B cell (primary cell): ENCODE measurements at regions of chr11 and their contacts with region 1.

Region 1: GRCh38 chr11:95705485-95706124 is 84.0 kb downstream of the FAM76B start:
- DNase-seq: peak; percentile 91
- ATAC-seq: peak; percentile 90
- H3K4me3 ChIP-seq: no peak overlapping the region
- H3K4me3 Mint-ChIP-seq: no peak overlapping the region
- H3K27ac ChIP-seq: peak overlapping the region; percentile 14 to 68
- H3K27ac Mint-ChIP-seq: no peak overlapping the region
- H3K4me1 ChIP-seq: peaks cover 28 to 30% of the 10 kb centered on the region in 2 donors
- H3K4me1 Mint-ChIP-seq: peaks cover 27% of the 10 kb centered on the region
- H3K27me3 ChIP-seq: no peaks in the 10 kb centered on the region
- H3K27me3 Mint-ChIP-seq: no peaks in the 10 kb centered on the region
- CTCF ChIP-seq: peak; percentile 91

Region 2: GRCh38 chr11:95175818-95176368 is 529.7 kb before region 1 on chr11:
- CTCF ChIA-PET with region 1: interaction called, 19 read pairs
- POLR2A ChIA-PET with region 1: no interaction called
- intact Hi-C with region 1: no loop called
- DNase-seq: no peak
- ATAC-seq: no peak
- H3K4me3 ChIP-seq: no peak overlapping the region
- H3K4me3 Mint-ChIP-seq: no peak overlapping the region
- H3K27ac ChIP-seq: no peak overlapping the region
- H3K27ac Mint-ChIP-seq: no peak overlapping the region
- H3K4me1 ChIP-seq: no peaks in the 10 kb centered on the region
- H3K4me1 Mint-ChIP-seq: no peaks in the 10 kb centered on the region
- H3K27me3 ChIP-seq: no peaks in the 10 kb centered on the region
- H3K27me3 Mint-ChIP-seq: no peaks in the 10 kb centered on the region
- CTCF ChIP-seq: no peak

Region 3: DNA sequence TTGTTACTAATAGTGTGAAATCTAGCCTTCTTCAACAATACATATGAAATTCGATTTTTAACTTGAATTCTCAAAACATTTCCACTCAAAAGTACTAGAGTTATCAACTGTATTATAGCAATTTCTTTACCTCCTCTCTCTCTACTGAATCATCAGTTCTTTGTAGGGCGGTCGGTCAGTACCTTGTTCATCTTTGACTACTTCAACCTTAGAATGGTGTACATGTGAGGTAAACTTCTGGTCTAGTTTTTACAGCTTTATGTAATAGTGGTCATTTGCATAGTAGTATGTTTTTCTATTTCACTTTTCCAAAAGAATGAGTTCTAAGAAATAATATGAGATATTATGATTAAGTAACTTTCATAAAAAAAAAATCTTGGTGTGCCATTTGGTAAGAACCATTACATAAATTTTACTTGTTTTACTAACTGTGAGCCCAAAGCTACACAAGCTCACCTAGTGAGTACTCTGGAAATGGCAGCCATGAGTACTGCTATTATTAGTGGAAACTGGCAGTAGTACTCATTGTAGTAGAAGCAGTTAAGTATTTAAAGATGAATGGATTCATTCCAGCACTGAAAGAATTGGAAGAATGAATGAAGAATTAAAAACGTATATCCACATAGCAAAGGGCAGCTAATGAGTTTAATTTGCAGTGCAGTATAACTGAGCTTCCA is 504.7 kb before region 1 on chr11:
- CTCF ChIA-PET with region 1: interaction called, 19 read pairs
- POLR2A ChIA-PET with region 1: interaction called, 3 read pairs
- intact Hi-C with region 1: no loop called
- DNase-seq: no peak
- ATAC-seq: no peak
- H3K4me3 ChIP-seq: no peak overlapping the region
- H3K4me3 Mint-ChIP-seq: no peak overlapping the region
- H3K27ac ChIP-seq: no peak overlapping the region
- H3K27ac Mint-ChIP-seq: no peak overlapping the region
- H3K4me1 ChIP-seq: peaks cover 10 to 18% of the 10 kb centered on the region in 2 donors
- H3K4me1 Mint-ChIP-seq: peaks cover 68% of the 10 kb centered on the region
- H3K27me3 ChIP-seq: no peaks in the 10 kb centered on the region
- H3K27me3 Mint-ChIP-seq: no peaks in the 10 kb centered on the region
- CTCF ChIP-seq: no peak

Region 4: GRCh38 chr11:95231127-95231880 is 474.3 kb before region 1 on chr11 and contains the start of gene SESN3:
- CTCF ChIA-PET with region 1: interaction called, 121 read pairs
- POLR2A ChIA-PET with region 1: interaction called, 31 read pairs
- intact Hi-C with region 1: loop called (anchors 1 kb)
- DNase-seq: peak; percentile 99
- ATAC-seq: peak; percentile 83
- H3K4me3 ChIP-seq: peak within 1 kb of the TSS; percentile 73 to 94 (median 88)
- H3K4me3 Mint-ChIP-seq: no peak within 1 kb of the TSS
- H3K27ac ChIP-seq: peak within 1 kb of the TSS; percentile 94 to 96
- H3K27ac Mint-ChIP-seq: peak within 1 kb of the TSS; percentile 95
- H3K4me1 ChIP-seq: peaks cover 29 to 32% of the 10 kb centered on the region in 2 donors
- H3K4me1 Mint-ChIP-seq: peaks cover 31% of the 10 kb centered on the region
- H3K27me3 ChIP-seq: no peaks in the 10 kb centered on the region
- H3K27me3 Mint-ChIP-seq: no peaks in the 10 kb centered on the region
- CTCF ChIP-seq: no peak
- total RNA-seq, gene SESN3: 519 and 537 TPM in 2 replicates

Region 5: DNA sequence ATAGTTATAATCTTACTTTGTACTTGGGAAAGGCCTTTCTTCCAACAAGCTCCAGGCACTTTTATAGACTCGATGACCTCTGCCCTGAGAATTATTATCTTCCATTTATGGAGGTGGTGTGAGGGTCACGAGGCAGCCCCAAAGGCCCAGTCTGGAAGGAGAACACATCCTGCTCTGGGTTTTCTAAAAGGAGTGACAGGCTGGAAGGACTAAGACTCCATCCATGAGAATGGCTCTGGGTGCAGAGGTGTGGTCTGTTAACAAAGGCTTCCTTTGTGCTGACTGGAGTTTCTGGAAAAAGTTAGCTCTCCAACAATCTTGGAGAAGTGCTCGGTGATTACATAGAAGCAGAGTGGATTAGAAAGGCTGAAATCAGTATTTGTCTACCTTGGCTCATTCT is 399.9 kb before region 1 on chr11:
- CTCF ChIA-PET with region 1: interaction called, 18 read pairs
- POLR2A ChIA-PET with region 1: no interaction called
- intact Hi-C with region 1: no loop called
- DNase-seq: no peak
- ATAC-seq: no peak
- H3K4me3 ChIP-seq: no peak overlapping the region
- H3K4me3 Mint-ChIP-seq: no peak overlapping the region
- H3K27ac ChIP-seq: no peak overlapping the region
- H3K27ac Mint-ChIP-seq: peak overlapping the region; percentile 5
- H3K4me1 ChIP-seq: peaks cover 22 to 23% of the 10 kb centered on the region in 2 donors
- H3K4me1 Mint-ChIP-seq: peaks cover 34% of the 10 kb centered on the region
- H3K27me3 ChIP-seq: no peaks in the 10 kb centered on the region
- H3K27me3 Mint-ChIP-seq: no peaks in the 10 kb centered on the region
- CTCF ChIP-seq: no peak

Region 6: DNA sequence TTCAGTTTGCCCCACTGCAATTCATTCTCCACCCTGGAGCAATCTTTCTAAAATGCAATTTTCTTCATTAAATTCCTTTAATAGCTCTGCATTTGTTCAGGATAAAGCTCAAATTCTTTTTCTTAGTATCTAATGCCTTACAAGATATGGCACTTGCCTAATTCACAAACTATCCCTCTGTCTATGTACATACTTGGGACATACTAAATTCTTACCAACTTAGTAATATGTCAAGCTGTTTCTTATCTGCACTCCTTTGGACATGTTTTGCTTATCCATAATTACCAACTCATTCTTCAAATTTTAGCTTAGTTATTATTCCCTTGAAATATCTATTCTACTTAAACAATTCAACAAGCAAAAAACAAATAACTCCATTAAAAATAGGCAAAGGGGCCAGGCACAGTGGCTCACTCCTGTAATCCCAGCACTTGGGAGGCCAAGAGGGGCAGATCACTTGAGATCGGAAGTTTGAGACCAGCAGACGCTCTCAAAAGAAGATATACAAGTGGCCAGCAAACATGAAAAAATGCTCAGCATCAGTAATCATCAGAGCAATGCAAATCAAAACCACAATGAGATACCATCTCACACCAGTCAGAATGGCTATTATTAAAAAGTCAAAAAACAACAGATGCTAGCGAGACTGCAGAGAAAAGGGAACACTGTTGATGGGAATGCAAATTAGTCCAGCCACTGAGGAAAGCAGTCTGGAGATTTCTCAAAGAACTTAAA is 12.9 kb before region 1 on chr11:
- CTCF ChIA-PET with region 1: interaction called, 38 read pairs
- POLR2A ChIA-PET with region 1: no interaction called
- intact Hi-C with region 1: no loop called
- DNase-seq: peak; percentile 33
- ATAC-seq: peak; percentile 59
- H3K4me3 ChIP-seq: peak overlapping the region in 1 of 5 experiments; percentile 21
- H3K4me3 Mint-ChIP-seq: no peak overlapping the region
- H3K27ac ChIP-seq: no peak overlapping the region
- H3K27ac Mint-ChIP-seq: no peak overlapping the region
- H3K4me1 ChIP-seq: peaks cover 31 to 33% of the 10 kb centered on the region in 2 donors
- H3K4me1 Mint-ChIP-seq: peaks cover 22% of the 10 kb centered on the region
- H3K27me3 ChIP-seq: no peaks in the 10 kb centered on the region
- H3K27me3 Mint-ChIP-seq: no peaks in the 10 kb centered on the region
- CTCF ChIP-seq: no peak